Activated B cell treated with CpG ODN at 0.5 μM for 24 hours (primary cell): ENCODE measurements at regions of chr19 and their contacts with region 1.

Region 1: GRCh38 chr19:1269065-1269477 is at the start of gene CIRBP:
- DNase-seq: peak; percentile 99
- ATAC-seq: peak; percentile 72
- H3K4me3 Mint-ChIP-seq: peak within 1 kb of the TSS; percentile 86
- H3K27ac Mint-ChIP-seq: peak within 1 kb of the TSS; percentile 85
- H3K4me1 Mint-ChIP-seq: peaks cover 79% of the 10 kb centered on the region
- H3K27me3 Mint-ChIP-seq: no peaks in the 10 kb centered on the region
- CTCF ChIP-seq: no peak
- total RNA-seq, gene CIRBP: 399 and 400 TPM in 2 replicates

Region 2: DNA sequence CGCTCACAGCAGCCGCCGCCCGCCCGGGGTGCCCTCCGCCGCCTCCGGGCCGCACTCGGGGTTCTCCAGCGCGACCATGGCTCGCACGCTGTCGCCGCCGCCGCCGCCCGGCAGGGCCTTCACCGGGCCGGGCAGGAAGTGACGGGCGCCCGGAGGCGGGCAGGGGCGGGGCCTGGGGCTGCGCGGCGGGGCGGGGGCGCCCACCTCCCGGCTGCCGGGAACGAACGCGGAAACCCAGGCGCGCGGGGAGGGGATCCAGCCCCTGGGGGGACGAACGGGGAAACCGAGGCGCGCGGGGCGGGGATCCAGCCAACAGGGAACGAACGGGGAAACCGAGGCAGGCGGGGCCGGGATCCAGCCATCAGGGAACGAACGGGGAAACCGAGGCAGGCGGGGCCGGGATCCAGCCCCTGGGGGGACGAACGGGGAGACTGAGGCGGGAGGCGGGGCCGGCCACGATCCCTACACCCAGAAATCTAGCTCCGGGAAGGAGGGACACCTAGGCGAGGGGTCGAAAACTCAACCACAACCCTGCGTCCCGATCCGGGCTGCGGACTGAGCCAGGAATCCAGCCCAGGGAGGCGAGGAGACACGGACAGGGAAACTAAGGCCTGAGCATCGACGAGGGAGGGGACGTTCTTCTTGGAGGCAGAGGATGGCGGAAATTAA is 355.9 kb before region 1 on chr19 and contains the start of gene R3HDM4:
- CTCF ChIA-PET with region 1: no interaction called
- POLR2A ChIA-PET with region 1: interaction called, 14 read pairs
- intact Hi-C with region 1: loop called (anchors 5 kb)
- DNase-seq: peak; percentile 85
- ATAC-seq: peak; percentile 50
- H3K4me3 Mint-ChIP-seq: peak within 1 kb of the TSS; percentile 89
- H3K27ac Mint-ChIP-seq: peak within 1 kb of the TSS; percentile 86
- H3K4me1 Mint-ChIP-seq: peaks cover 36% of the 10 kb centered on the region
- H3K27me3 Mint-ChIP-seq: no peaks in the 10 kb centered on the region
- CTCF ChIP-seq: no peak
- total RNA-seq, gene R3HDM4: 174 and 189 TPM in 2 replicates

Region 3: DNA sequence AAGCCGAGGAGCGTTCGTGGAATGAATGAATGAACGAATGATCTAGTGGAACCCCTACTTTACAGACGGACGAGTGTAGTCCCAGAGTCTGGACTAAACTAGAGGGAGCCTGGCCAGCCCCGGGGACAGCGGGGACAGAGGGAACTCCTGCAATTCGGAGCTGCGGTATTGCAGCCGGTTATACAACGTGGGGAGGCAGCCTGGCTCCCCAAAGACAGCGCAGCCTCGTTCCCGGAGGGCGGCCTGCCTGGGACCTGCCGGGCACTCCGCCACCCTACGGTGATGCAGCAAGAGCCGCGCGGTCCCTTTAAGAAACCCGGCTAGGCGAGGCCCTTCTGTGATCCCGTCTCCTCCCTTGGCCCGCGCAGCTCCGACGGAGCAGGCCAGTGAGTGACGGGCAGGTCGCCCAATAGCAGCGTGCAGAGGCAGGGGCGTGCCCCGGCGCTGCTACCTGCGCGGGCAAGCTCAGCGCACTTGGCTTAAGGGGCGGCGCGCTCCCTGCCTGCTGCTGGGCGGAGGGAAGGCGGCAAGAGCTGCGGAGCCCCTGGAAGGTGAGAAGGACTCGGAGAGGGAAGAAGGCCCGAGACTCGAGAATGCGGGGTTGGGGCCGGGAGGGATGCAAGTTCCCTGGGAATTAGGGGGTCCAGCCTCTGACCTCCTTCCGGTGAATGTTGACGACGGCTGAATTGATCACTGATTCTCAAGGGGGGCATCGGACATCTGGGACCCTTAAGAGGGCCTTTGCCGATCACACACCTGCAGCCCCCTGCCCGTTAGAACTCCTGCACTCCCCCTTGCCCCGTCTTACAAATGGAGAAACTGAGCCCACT is 229.2 kb before region 1 on chr19 and contains the start of gene ABCA7:
- CTCF ChIA-PET with region 1: no interaction called
- POLR2A ChIA-PET with region 1: interaction called, 16 read pairs
- intact Hi-C with region 1: no loop called
- DNase-seq: peak; percentile 99
- ATAC-seq: peak; percentile 78
- H3K4me3 Mint-ChIP-seq: peak within 1 kb of the TSS; percentile 98
- H3K27ac Mint-ChIP-seq: peak within 1 kb of the TSS; percentile 96
- H3K4me1 Mint-ChIP-seq: peaks cover 61% of the 10 kb centered on the region
- H3K27me3 Mint-ChIP-seq: no peaks in the 10 kb centered on the region
- CTCF ChIP-seq: no peak
- total RNA-seq, gene ABCA7: 164 and 188 TPM in 2 replicates

Region 4: GRCh38 chr19:1094975-1095701 is 173.9 kb before region 1 on chr19 and contains the start of gene POLR2E:
- CTCF ChIA-PET with region 1: no interaction called
- POLR2A ChIA-PET with region 1: interaction called, 10 read pairs
- intact Hi-C with region 1: no loop called
- DNase-seq: peak; percentile 98
- ATAC-seq: peak; percentile 98
- H3K4me3 Mint-ChIP-seq: peak within 1 kb of the TSS; percentile 90
- H3K27ac Mint-ChIP-seq: peak within 1 kb of the TSS; percentile 84
- H3K4me1 Mint-ChIP-seq: peaks cover 45% of the 10 kb centered on the region
- H3K27me3 Mint-ChIP-seq: no peaks in the 10 kb centered on the region
- CTCF ChIP-seq: no peak
- total RNA-seq, gene POLR2E: 173 and 184 TPM in 2 replicates

Region 5: GRCh38 chr19:1241417-1242095 is 27.5 kb before region 1 on chr19 and contains the start of gene ATP5F1D:
- CTCF ChIA-PET with region 1: interaction called, 540 read pairs
- POLR2A ChIA-PET with region 1: interaction called, 824 read pairs
- intact Hi-C with region 1: loop called (anchors 1 kb)
- DNase-seq: peak; percentile 85
- ATAC-seq: peak; percentile 67
- H3K4me3 Mint-ChIP-seq: peak within 1 kb of the TSS; percentile 86
- H3K27ac Mint-ChIP-seq: peak within 1 kb of the TSS; percentile 74
- H3K4me1 Mint-ChIP-seq: peaks cover 53% of the 10 kb centered on the region
- H3K27me3 Mint-ChIP-seq: peaks cover 7% of the 10 kb centered on the region
- CTCF ChIP-seq: no peak
- total RNA-seq, gene ATP5F1D: 172 and 185 TPM in 2 replicates

Region 6: GRCh38 chr19:1383311-1384084 is 114.4 kb after region 1 on chr19 and contains the start of gene NDUFS7:
- CTCF ChIA-PET with region 1: no interaction called
- POLR2A ChIA-PET with region 1: interaction called, 20 read pairs
- intact Hi-C with region 1: no loop called
- DNase-seq: peak; percentile 98
- ATAC-seq: peak; percentile 86
- H3K4me3 Mint-ChIP-seq: peak within 1 kb of the TSS; percentile 93
- H3K27ac Mint-ChIP-seq: peak within 1 kb of the TSS; percentile 99
- H3K4me1 Mint-ChIP-seq: peaks cover 23% of the 10 kb centered on the region
- H3K27me3 Mint-ChIP-seq: peaks cover 3% of the 10 kb centered on the region
- CTCF ChIP-seq: no peak
- total RNA-seq, gene NDUFS7: 82.1 and 84.3 TPM in 2 replicates

Region 7: GRCh38 chr19:1424192-1424955 is 155.3 kb after region 1 on chr19:
- CTCF ChIA-PET with region 1: no interaction called
- POLR2A ChIA-PET with region 1: no interaction called
- intact Hi-C with region 1: no loop called
- DNase-seq: no peak
- ATAC-seq: no peak
- H3K4me3 Mint-ChIP-seq: no peak overlapping the region
- H3K27ac Mint-ChIP-seq: no peak overlapping the region
- H3K4me1 Mint-ChIP-seq: peaks cover 3% of the 10 kb centered on the region
- H3K27me3 Mint-ChIP-seq: no peaks in the 10 kb centered on the region
- CTCF ChIP-seq: no peak